CD8-positive, alpha-beta T cell (primary cell): ENCODE measurements at regions of chr3 and their contacts with region 1.

Region 1: DNA sequence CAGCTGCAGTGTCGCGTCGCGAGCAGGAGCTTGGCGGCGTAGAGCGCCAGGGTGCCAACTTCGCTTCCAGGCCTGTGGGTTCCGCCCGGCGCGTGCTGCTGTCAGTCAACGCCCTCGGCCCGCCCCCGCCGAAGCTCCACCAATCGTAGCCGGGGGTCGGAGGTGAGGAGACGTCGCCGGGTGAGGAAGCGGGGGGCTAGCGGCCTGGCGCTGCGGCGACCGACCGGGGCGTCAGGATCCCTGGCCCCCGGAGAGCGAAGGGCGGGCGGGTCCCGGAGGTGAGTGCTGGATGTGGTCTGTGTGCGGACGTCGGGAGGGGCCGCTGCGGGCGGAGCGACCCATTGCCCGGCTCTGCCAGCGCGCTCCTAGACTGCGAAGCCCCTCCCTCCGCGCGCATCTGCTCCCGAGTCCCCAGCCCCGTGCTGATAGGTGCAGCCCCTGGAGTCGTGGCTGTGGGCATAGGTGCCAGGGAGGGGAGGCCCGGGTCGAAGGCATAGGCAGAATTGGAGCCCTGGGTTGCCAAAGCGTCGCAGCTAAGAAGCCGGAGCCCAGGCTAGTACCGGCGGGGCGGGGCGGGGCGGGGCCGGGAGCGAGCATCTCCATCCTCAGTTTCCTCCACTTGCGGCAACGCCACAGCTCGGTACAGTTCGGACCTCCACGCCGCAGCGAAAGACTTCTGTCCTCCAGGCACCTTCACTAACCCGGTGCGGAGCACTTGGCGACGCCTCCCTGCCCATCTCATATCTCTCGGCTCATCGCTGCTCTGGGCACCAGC is at the start of gene NXPE3:
- DNase-seq: peak; percentile 86 to 96 (median 94)
- ATAC-seq: peak; percentile 88
- H3K4me3 ChIP-seq: peak within 1 kb of the TSS; percentile 48 to 92
- H3K4me3 Mint-ChIP-seq: peak within 1 kb of the TSS; percentile 89
- H3K27ac ChIP-seq: peak within 1 kb of the TSS; percentile 77 to 88
- H3K27ac Mint-ChIP-seq: peak within 1 kb of the TSS; percentile 99
- H3K4me1 ChIP-seq: peaks cover 42% of the 10 kb centered on the region
- H3K4me1 Mint-ChIP-seq: peaks cover 57% of the 10 kb centered on the region
- H3K27me3 ChIP-seq: no peaks in the 10 kb centered on the region
- H3K27me3 Mint-ChIP-seq: no peaks in the 10 kb centered on the region
- CTCF ChIP-seq: no peak
- total RNA-seq, gene NXPE3: 39.8 to 40.3 TPM

Region 2: GRCh38 chr3:101561630-101562328 is 217.5 kb before region 1 on chr3 and contains the start of gene TRMT10C:
- CTCF ChIA-PET with region 1: no interaction called
- POLR2A ChIA-PET with region 1: no interaction called
- intact Hi-C with region 1: loop called in 1 of 2 experiments (anchors 1 kb)
- DNase-seq: peak; percentile 86 to 96 (median 92)
- ATAC-seq: peak; percentile 95
- H3K4me3 ChIP-seq: peak within 1 kb of the TSS; percentile 83 to 96
- H3K4me3 Mint-ChIP-seq: peak within 1 kb of the TSS; percentile 99
- H3K27ac ChIP-seq: peak within 1 kb of the TSS; percentile 86 to 93
- H3K27ac Mint-ChIP-seq: peak within 1 kb of the TSS; percentile 99
- H3K4me1 ChIP-seq: peaks cover 12% of the 10 kb centered on the region
- H3K4me1 Mint-ChIP-seq: peaks cover 27% of the 10 kb centered on the region
- H3K27me3 ChIP-seq: no peaks in the 10 kb centered on the region
- H3K27me3 Mint-ChIP-seq: peaks cover 1% of the 10 kb centered on the region
- CTCF ChIP-seq: no peak
- total RNA-seq, gene TRMT10C: 41.5 to 44.0 TPM

Region 3: GRCh38 chr3:101676765-101677435 is 102.3 kb before region 1 on chr3 and contains the start of gene ZBTB11:
- CTCF ChIA-PET with region 1: no interaction called
- POLR2A ChIA-PET with region 1: interaction called, 11 read pairs
- intact Hi-C with region 1: loop called in 1 of 2 experiments (anchors 1 kb)
- DNase-seq: peak; percentile 99 to 100 (median 100)
- ATAC-seq: peak; percentile 63
- H3K4me3 ChIP-seq: peak within 1 kb of the TSS; percentile 90 to 100
- H3K4me3 Mint-ChIP-seq: peak within 1 kb of the TSS; percentile 95
- H3K27ac ChIP-seq: peak within 1 kb of the TSS; percentile 97 to 99
- H3K27ac Mint-ChIP-seq: peak within 1 kb of the TSS; percentile 98
- H3K4me1 ChIP-seq: peaks cover 26% of the 10 kb centered on the region
- H3K4me1 Mint-ChIP-seq: peaks cover 49% of the 10 kb centered on the region
- H3K27me3 ChIP-seq: no peaks in the 10 kb centered on the region
- H3K27me3 Mint-ChIP-seq: no peaks in the 10 kb centered on the region
- CTCF ChIP-seq: no peak
- total RNA-seq, gene ZBTB11: 69.6 to 75.2 TPM

Region 4: GRCh38 chr3:101685870-101686412 is 93.3 kb before region 1 on chr3:
- CTCF ChIA-PET with region 1: no interaction called
- POLR2A ChIA-PET with region 1: interaction called, 14 read pairs
- intact Hi-C with region 1: loop called (anchors 2 kb)
- DNase-seq: no peak
- ATAC-seq: peak; percentile 3
- H3K4me3 ChIP-seq: peak overlapping the region; percentile 89 to 93
- H3K4me3 Mint-ChIP-seq: peak overlapping the region; percentile 100
- H3K27ac ChIP-seq: peak overlapping the region; percentile 94 to 96
- H3K27ac Mint-ChIP-seq: peak overlapping the region; percentile 99
- H3K4me1 ChIP-seq: peaks cover 39% of the 10 kb centered on the region
- H3K4me1 Mint-ChIP-seq: peaks cover 36% of the 10 kb centered on the region
- H3K27me3 ChIP-seq: no peaks in the 10 kb centered on the region
- H3K27me3 Mint-ChIP-seq: no peaks in the 10 kb centered on the region
- CTCF ChIP-seq: no peak

Region 5: DNA sequence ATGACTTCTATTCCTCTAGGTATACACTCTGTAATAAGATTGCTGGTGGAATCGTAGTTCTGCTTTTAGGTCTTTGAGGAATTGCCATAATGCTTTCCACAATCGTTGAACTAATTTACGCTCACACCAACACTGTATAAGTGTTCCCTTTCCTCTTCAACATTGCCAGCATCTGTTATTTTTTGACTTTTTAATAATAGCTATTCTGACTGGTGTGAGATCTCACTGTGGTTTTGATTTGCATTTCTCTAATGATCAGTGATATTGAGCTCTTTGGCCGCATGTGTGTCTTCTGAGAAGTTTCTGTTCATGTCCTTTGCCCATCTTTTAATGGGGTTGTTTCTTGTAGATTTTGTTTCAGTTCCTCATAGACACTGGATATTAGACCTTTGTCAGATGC is 12.5 kb after region 1 on chr3:
- CTCF ChIA-PET with region 1: no interaction called
- POLR2A ChIA-PET with region 1: interaction called, 10 read pairs
- intact Hi-C with region 1: no loop called
- DNase-seq: no peak
- ATAC-seq: no peak
- H3K4me3 ChIP-seq: no peak overlapping the region
- H3K4me3 Mint-ChIP-seq: no peak overlapping the region
- H3K27ac ChIP-seq: no peak overlapping the region
- H3K27ac Mint-ChIP-seq: peak overlapping the region; percentile 37
- H3K4me1 ChIP-seq: peaks cover 16% of the 10 kb centered on the region
- H3K4me1 Mint-ChIP-seq: peaks cover 78% of the 10 kb centered on the region
- H3K27me3 ChIP-seq: no peaks in the 10 kb centered on the region
- H3K27me3 Mint-ChIP-seq: no peaks in the 10 kb centered on the region
- CTCF ChIP-seq: no peak

Region 6: GRCh38 chr3:101803173-101803782 is 24.0 kb after region 1 on chr3:
- CTCF ChIA-PET with region 1: interaction called, 8 read pairs
- POLR2A ChIA-PET with region 1: interaction called, 9 read pairs
- intact Hi-C with region 1: loop called in 1 of 2 experiments (anchors 2 kb)
- DNase-seq: peak in 7 of 9 experiments; percentile 30 to 87 (median 61)
- ATAC-seq: peak; percentile 100
- H3K4me3 ChIP-seq: no peak overlapping the region
- H3K4me3 Mint-ChIP-seq: peak overlapping the region; percentile 32
- H3K27ac ChIP-seq: no peak overlapping the region
- H3K27ac Mint-ChIP-seq: peak overlapping the region; percentile 75
- H3K4me1 ChIP-seq: no peaks in the 10 kb centered on the region
- H3K4me1 Mint-ChIP-seq: peaks cover 36% of the 10 kb centered on the region
- H3K27me3 ChIP-seq: no peaks in the 10 kb centered on the region
- H3K27me3 Mint-ChIP-seq: no peaks in the 10 kb centered on the region
- CTCF ChIP-seq: peak; percentile 97